Mammary epithelial cell (primary cell): ENCODE measurements at regions of chr1 and their contacts with region 1.

Region 1: DNA sequence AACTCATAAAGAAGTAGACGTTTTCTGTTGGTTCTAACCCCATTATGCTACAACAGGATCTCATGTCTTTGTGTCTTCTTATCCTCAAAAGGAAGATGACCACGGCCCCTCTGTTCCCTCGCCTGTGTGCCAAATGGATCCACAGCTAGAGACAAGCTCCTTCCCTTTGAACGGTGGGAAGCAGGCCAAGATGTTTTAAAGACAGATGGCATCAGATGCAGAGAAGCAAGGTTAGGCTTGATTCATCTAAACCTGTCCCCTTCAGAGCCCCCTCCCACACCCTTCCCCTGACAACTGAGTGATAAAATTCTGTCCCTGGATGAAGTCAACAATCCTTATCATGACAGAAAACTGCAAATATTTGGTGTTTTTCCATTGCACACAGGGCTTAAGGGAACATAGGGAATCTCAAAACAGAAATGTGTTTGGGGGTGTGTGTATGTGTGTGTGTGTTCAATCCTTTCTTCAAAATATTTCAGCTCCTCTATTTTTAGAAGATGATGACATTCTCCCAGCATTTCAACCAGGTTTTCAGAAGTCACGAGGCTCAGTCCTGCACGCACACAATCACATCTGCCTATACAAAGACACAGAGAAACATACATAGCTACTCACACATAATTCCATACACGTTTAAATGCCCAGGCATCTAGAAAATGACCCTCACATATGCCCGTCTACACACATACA is 27.8 kb upstream of the FMOD start:
- DNase-seq: no peak
- H3K4me3 ChIP-seq: no peak overlapping the region
- H3K27ac ChIP-seq: no peak overlapping the region
- H3K4me1 ChIP-seq: no peaks in the 10 kb centered on the region
- H3K27me3 ChIP-seq: no peaks in the 10 kb centered on the region
- CTCF ChIP-seq: no peak

Region 2: GRCh38 chr1:203331224-203331623 is 47.5 kb before region 1 on chr1:
- CTCF ChIA-PET with region 1: no interaction called
- dilution Hi-C with region 1: no loop called
- in situ Hi-C with region 1: no loop called
- intact Hi-C with region 1: no loop called
- DNase-seq: peak; percentile 45
- H3K4me3 ChIP-seq: no peak overlapping the region
- H3K27ac ChIP-seq: no peak overlapping the region
- H3K4me1 ChIP-seq: peaks cover 19% of the 10 kb centered on the region
- H3K27me3 ChIP-seq: no peaks in the 10 kb centered on the region
- CTCF ChIP-seq: no peak

Region 3: DNA sequence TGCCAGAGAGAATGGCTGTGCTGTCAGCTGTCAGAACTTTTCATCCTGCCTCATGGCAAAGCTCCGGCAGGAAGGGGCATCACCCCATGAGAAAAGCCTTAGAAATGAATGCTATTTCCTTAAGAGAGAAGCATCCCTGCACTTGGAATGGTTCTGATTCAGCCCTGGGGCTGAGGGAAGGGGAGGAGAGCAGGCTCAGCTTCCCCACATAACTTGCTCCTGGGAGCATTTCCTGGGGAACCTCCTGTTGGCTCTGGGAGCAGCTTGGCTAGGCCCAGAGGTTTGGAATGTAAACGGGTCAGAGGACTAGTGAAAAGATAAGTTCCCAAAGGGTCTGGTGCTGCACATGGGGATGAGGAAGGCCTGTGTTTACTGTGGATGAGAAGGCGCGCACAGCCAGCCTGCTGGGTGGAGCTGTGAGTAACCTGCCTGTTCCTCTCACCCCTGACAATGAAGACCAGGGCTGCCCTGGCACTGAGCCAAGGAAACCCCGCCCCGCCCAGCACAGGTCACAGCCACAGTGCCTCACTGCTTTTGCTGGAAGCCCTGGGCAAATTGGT is 101.9 kb after region 1 on chr1:
- CTCF ChIA-PET with region 1: no interaction called
- dilution Hi-C with region 1: no loop called
- in situ Hi-C with region 1: loop called in 1 of 2 experiments (anchors 10 kb)
- intact Hi-C with region 1: no loop called
- DNase-seq: peak; percentile 82
- H3K4me3 ChIP-seq: no peak overlapping the region
- H3K27ac ChIP-seq: peak overlapping the region; percentile 1
- H3K4me1 ChIP-seq: peaks cover 21% of the 10 kb centered on the region
- H3K27me3 ChIP-seq: no peaks in the 10 kb centered on the region
- CTCF ChIP-seq: no peak